Activated naive CD4-positive, alpha-beta T cell treated with anti-CD3 and anti-CD28 coated beads for 36 hours (primary cell): ENCODE measurements at regions of chr5 and their contacts with region 1.

Region 1: DNA sequence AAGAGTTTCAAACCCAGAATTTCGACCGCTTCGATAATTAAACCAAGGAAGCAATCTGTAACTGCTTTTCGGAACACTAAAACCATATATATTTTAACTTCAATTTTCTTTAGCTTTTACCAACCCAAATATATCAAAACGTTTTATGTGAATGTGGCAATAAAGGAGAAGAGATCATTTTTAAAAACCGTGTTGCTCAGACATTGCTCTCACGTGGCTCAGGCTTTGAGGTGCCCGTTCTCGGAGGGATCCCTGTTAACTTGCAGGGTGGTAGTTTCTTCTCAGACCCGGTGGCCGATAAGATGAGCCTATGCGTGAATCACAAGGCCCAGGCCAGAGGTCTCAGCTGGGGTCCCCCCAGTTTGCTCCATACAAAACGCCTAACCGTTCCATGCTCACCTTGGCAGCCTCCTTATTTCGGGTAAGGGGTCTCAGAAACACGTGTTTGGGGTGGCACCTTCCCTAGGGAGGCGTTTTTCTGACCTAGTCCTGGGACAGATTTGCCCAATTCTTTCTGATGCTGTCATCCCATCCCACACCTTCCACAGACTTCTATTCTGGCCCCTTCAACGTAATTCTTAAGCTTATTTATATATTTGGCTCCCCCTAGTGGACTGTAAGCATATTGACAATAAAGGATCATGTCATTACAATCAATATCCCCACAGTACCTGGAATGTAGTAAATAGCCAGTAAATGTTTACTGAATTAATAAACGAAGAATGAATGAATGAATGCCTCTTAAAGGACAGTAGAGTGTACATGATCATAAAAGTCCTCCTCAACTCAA is 48.1 kb downstream of the THBS4 start:
- DNase-seq: peak; percentile 23
- H3K4me3 Mint-ChIP-seq: peak overlapping the region; percentile 56
- H3K27ac Mint-ChIP-seq: no peak overlapping the region
- H3K4me1 Mint-ChIP-seq: peaks cover 12% of the 10 kb centered on the region
- H3K27me3 Mint-ChIP-seq: no peaks in the 10 kb centered on the region

Region 2: GRCh38 chr5:79020861-79021561 is 1062.3 kb before region 1 on chr5:
- CTCF ChIA-PET with region 1: interaction called, 6 read pairs
- intact Hi-C with region 1: loop called (anchors 2 kb)
- DNase-seq: peak; percentile 71
- H3K4me3 Mint-ChIP-seq: no peak overlapping the region
- H3K27ac Mint-ChIP-seq: no peak overlapping the region
- H3K4me1 Mint-ChIP-seq: peaks cover 8% of the 10 kb centered on the region
- H3K27me3 Mint-ChIP-seq: peaks cover 46% of the 10 kb centered on the region

Region 3: DNA sequence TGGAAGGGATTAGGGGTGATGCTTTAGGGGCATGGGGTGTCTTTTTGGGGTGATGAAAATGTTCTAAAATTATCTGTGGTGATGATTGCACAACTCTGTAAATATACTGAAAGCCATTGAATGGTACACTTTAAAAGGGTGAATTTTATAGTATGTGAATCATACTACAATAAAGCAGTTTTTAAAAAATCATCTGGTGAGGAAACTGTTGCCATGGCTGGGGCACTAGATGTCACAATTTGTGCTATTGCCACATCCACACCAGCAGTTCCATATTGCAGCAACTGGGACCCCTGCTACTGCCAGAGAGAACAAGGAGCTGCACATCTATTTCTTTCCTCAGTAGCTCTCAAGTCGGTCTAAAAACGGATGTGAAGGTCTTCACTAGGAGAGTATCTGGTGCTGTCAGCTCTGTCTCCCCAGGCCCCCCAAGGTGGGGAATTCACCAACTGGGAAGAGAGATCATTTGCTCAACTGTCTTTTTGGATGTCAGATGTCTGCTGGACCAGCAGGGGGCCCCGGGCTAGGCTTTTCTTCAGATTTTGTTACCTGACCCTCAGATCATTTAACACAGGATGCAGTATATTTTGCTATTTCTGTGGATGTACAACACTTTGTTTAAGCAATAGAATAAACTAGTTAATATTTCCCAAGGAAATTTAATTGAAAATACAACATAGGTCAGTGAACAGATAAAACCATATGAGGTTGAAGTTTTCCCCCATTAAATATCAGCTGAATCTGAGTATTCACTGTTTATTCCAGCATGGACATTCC is 380.5 kb before region 1 on chr5:
- CTCF ChIA-PET with region 1: interaction called, 9 read pairs
- intact Hi-C with region 1: loop called (anchors 1 kb)
- DNase-seq: peak; percentile 59
- H3K4me3 Mint-ChIP-seq: no peak overlapping the region
- H3K27ac Mint-ChIP-seq: no peak overlapping the region
- H3K4me1 Mint-ChIP-seq: peaks cover 10% of the 10 kb centered on the region
- H3K27me3 Mint-ChIP-seq: no peaks in the 10 kb centered on the region

Region 4: GRCh38 chr5:79878721-79879336 is 204.5 kb before region 1 on chr5:
- CTCF ChIA-PET with region 1: interaction called, 32 read pairs
- intact Hi-C with region 1: loop called (anchors 1 kb)
- DNase-seq: peak; percentile 65
- H3K4me3 Mint-ChIP-seq: no peak overlapping the region
- H3K27ac Mint-ChIP-seq: no peak overlapping the region
- H3K4me1 Mint-ChIP-seq: no peaks in the 10 kb centered on the region
- H3K27me3 Mint-ChIP-seq: no peaks in the 10 kb centered on the region

Region 5: DNA sequence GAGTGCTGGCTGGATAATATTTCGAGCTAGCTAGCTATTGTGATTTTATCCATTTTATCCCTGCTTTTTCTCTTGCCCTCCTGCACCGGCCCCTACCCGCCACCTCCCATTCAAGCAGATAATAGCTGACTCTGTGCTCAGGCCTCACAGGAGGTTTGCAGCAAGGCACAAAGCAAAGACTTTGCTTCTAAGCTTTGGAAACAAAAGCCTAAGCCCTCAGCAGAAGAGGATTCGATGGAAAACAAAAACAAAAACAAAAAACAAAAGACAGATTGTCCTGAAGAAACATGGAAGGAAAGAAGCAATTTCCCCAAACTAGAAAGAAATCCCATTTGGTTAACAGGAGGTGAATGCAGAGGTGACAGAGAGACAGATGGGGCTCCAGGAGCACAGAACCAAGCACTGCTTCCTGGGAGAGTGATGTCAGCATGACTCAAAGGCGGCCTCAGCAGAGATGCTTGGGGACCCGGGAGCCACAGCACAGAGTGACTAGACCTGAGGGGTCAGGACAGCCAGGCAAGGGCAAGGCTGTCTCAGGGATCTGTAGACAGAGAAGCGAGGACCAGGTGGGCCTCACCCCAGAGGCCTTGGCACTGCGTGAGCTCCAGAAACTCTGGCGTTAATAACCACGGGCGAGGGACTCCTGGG is 120.6 kb before region 1 on chr5:
- CTCF ChIA-PET with region 1: no interaction called
- intact Hi-C with region 1: loop called (anchors 1 kb)
- DNase-seq: peak; percentile 61
- H3K4me3 Mint-ChIP-seq: no peak overlapping the region
- H3K27ac Mint-ChIP-seq: peak overlapping the region; percentile 33
- H3K4me1 Mint-ChIP-seq: peaks cover 16% of the 10 kb centered on the region
- H3K27me3 Mint-ChIP-seq: peaks cover 17% of the 10 kb centered on the region

Region 6: DNA sequence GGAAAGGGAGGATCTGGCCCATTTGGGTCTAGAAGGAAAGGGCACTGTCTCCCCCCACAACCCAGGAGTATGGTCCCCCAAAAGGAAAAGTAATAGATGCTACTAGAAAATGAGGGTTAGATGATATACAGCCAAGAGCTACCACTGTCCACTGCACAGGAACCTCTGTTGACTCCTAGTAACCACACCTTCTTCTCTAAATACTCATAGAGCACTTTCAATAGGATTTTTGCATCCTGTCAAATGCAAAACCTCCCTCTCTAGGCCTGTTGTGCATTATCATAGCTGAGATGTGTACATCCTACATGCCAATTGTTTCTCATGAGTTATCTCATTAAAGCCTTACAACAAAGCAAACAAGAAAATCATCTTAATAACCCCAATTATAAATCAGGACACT is 18.7 kb after region 1 on chr5:
- CTCF ChIA-PET with region 1: interaction called, 15 read pairs
- intact Hi-C with region 1: no loop called
- DNase-seq: no peak
- H3K4me3 Mint-ChIP-seq: no peak overlapping the region
- H3K27ac Mint-ChIP-seq: no peak overlapping the region
- H3K4me1 Mint-ChIP-seq: peaks cover 31% of the 10 kb centered on the region
- H3K27me3 Mint-ChIP-seq: no peaks in the 10 kb centered on the region